ENCODE measurements at regions of chr12 and their contacts with region 1.

Region 1: DNA sequence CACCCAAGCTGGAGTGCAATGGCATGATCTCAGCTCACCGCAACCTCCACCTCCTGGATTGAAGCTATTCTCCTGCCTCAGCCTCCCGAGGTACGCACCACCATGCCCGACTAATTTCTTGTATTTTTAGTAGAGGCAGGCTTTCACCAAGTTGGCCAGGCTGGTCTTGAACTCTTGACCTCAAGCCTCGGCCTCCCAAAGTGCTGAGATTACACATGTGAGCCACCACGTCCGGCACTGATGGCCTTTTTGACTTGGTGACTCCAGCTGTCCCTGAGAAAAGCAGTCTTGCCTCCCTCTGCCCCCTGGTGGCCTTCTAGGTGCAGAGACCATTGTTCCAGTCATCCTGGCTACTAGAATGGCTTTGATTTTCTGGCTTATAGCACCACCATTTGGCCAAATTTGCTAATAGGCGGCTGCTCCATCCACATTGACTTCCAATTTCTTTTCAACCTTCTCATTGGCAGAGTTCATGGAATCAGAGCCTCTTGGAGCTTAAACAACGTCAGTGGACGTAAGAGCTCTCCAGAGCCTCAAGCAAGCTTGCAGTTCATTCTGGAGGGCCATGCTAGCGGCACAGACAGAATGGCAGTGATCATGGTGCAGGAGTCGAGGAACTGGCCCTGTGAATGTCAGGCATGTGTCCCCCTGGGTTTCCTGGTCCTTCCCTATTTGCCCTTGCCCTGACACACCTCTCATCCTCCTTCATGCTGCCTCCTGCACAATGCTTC is 25.4 kb upstream of the EIF4B start:
- DNase-seq: peak; percentile 92
- ATAC-seq: peak; percentile 86
- H3K4me3 Mint-ChIP-seq: no peak overlapping the region
- H3K27ac Mint-ChIP-seq: no peak overlapping the region
- H3K4me1 Mint-ChIP-seq: peaks cover 13% of the 10 kb centered on the region
- H3K27me3 Mint-ChIP-seq: no peaks in the 10 kb centered on the region; the same call in 1 of the 2 replicates
- CTCF ChIP-seq: peak; percentile 97

Region 2: GRCh38 chr12:52673217-52673616 is 307.6 kb before region 1 on chr12:
- CTCF ChIA-PET with region 1: no interaction called
- POLR2A ChIA-PET with region 1: no interaction called
- DNase-seq: no peak
- ATAC-seq: no peak
- H3K4me3 Mint-ChIP-seq: no peak overlapping the region
- H3K27ac Mint-ChIP-seq: no peak overlapping the region
- H3K4me1 Mint-ChIP-seq: no peaks in the 10 kb centered on the region
- H3K27me3 Mint-ChIP-seq: peaks cover 5% of the 10 kb centered on the region; the same call in 1 of the 2 replicates
- CTCF ChIP-seq: no peak

Region 3: GRCh38 chr12:52884526-52885293 is 96.1 kb before region 1 on chr12:
- CTCF ChIA-PET with region 1: interaction called, 526 read pairs
- POLR2A ChIA-PET with region 1: interaction called, 4 read pairs
- DNase-seq: peak; percentile 92
- ATAC-seq: peak; percentile 74
- H3K4me3 Mint-ChIP-seq: no peak overlapping the region
- H3K27ac Mint-ChIP-seq: no peak overlapping the region
- H3K4me1 Mint-ChIP-seq: no peaks in the 10 kb centered on the region
- H3K27me3 Mint-ChIP-seq: no peaks in the 10 kb centered on the region; the same call in 1 of the 2 replicates
- CTCF ChIP-seq: peak; percentile 98

Region 4: GRCh38 chr12:52903285-52903854 is 77.5 kb before region 1 on chr12:
- CTCF ChIA-PET with region 1: interaction called, 75 read pairs
- POLR2A ChIA-PET with region 1: interaction called, 7 read pairs
- DNase-seq: peak; percentile 90
- ATAC-seq: peak; percentile 56
- H3K4me3 Mint-ChIP-seq: peak overlapping the region; percentile 92
- H3K27ac Mint-ChIP-seq: 0 out of 2 replicates have a peak overlapping the region, but pooled peaks have one; percentile 32
- H3K4me1 Mint-ChIP-seq: peaks cover 43% of the 10 kb centered on the region
- H3K27me3 Mint-ChIP-seq: no peaks in the 10 kb centered on the region
- CTCF ChIP-seq: no peak

Region 5: GRCh38 chr12:52916216-52916615 is 64.6 kb before region 1 on chr12:
- CTCF ChIA-PET with region 1: interaction called, 31 read pairs
- POLR2A ChIA-PET with region 1: no interaction called
- DNase-seq: no peak
- ATAC-seq: no peak
- H3K4me3 Mint-ChIP-seq: no peak overlapping the region
- H3K27ac Mint-ChIP-seq: peak overlapping the region; percentile 59; the same call in 1 of the 2 replicates
- H3K4me1 Mint-ChIP-seq: peaks cover 11% of the 10 kb centered on the region
- H3K27me3 Mint-ChIP-seq: 0 out of 2 replicates have a peak, but pooled peaks cover 3% of the 10 kb centered on the region
- CTCF ChIP-seq: no peak

Region 6: GRCh38 chr12:52949413-52950331 is 31.2 kb before region 1 on chr12:
- CTCF ChIA-PET with region 1: interaction called, 28 read pairs
- POLR2A ChIA-PET with region 1: interaction called, 3 read pairs
- DNase-seq: peak; percentile 43
- ATAC-seq: peak; percentile 30
- H3K4me3 Mint-ChIP-seq: peak overlapping the region; percentile 94
- H3K27ac Mint-ChIP-seq: peak overlapping the region; percentile 87
- H3K4me1 Mint-ChIP-seq: peaks cover 65% of the 10 kb centered on the region
- H3K27me3 Mint-ChIP-seq: no peaks in the 10 kb centered on the region
- CTCF ChIP-seq: no peak

Region 7: GRCh38 chr12:52969828-52970569 is 10.9 kb before region 1 on chr12:
- CTCF ChIA-PET with region 1: interaction called, 42 read pairs
- POLR2A ChIA-PET with region 1: interaction called, 4 read pairs
- DNase-seq: no peak
- ATAC-seq: no peak
- H3K4me3 Mint-ChIP-seq: no peak overlapping the region
- H3K27ac Mint-ChIP-seq: no peak overlapping the region; the same call in 1 of the 2 replicates
- H3K4me1 Mint-ChIP-seq: peaks cover 26% of the 10 kb centered on the region
- H3K27me3 Mint-ChIP-seq: peaks cover 42% of the 10 kb centered on the region
- CTCF ChIP-seq: no peak

Region 8: GRCh38 chr12:53005986-53006809 is 25.3 kb after region 1 on chr12 and contains the start of gene EIF4B:
- CTCF ChIA-PET with region 1: interaction called, 26 read pairs
- POLR2A ChIA-PET with region 1: interaction called, 5 read pairs
- DNase-seq: peak; percentile 100
- ATAC-seq: peak; percentile 90
- H3K4me3 Mint-ChIP-seq: peak within 1 kb of the TSS; percentile 99
- H3K27ac Mint-ChIP-seq: peak within 1 kb of the TSS; percentile 100
- H3K4me1 Mint-ChIP-seq: peaks cover 50% of the 10 kb centered on the region
- H3K27me3 Mint-ChIP-seq: no peaks in the 10 kb centered on the region
- CTCF ChIP-seq: no peak
- total RNA-seq, gene EIF4B: 730 to 860 TPM (median 838 TPM) in 3 replicates

Measured in WTC11 (cell line).